Activated T-helper 1 cell treated with anti-CD3 and anti-CD28 coated beads, Interleukin-12 subunit alpha, Interleukin-12 subunit beta, Interleukin-2, Interleukin-4 antibody, amounts not matched to agents 30 ng/mL and 10 ng/mL and 1 ng/mL, durations not matched to agents 14 hours and 24 hours and 36 hours (primary cell): ENCODE measurements at regions of chr7 and their contacts with region 1.

Region 1: DNA sequence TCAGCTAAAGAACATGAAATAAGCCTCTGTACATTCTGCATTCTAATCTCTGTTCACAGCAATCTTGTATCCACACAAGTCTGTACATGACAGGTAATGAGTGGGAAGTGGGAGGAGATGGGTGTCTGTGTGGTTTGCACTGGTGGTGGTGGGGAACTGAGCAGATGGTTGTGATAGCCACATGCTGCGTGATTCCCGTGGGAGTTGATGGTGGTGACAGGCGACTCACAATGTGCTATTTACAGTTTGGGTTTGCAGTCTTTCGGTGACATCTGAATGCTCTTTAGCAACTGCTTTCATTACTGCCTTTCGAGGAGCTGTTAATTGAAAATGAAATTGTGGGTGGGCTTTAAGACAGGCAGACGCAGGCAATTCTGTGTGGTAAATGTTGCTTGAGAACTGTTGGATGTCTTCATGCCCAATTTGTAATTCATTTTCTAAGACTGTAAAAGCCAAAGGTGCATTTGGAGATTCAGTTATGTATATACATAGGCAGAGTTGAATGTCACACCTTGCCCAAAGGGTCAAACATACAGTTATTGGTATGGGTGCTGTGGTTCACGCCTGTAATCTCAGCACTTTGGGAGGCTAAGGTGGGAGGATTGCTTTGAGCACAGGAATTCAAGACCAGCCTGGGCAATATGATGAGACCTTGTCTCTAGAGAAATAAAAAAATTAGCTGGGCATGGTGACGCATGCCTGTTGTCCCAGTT is 308.2 kb downstream of the AUTS2 start:
- DNase-seq: no peak
- H3K4me3 Mint-ChIP-seq: no peak overlapping the region
- H3K27ac Mint-ChIP-seq: no peak overlapping the region
- H3K4me1 Mint-ChIP-seq: no peaks in the 10 kb centered on the region
- H3K27me3 Mint-ChIP-seq: no peaks in the 10 kb centered on the region

Region 2: GRCh38 chr7:69448071-69448470 is 458.4 kb before region 1 on chr7:
- intact Hi-C with region 1: no loop called
- DNase-seq: no peak
- H3K4me3 Mint-ChIP-seq: no peak overlapping the region
- H3K27ac Mint-ChIP-seq: no peak overlapping the region
- H3K4me1 Mint-ChIP-seq: no peaks in the 10 kb centered on the region
- H3K27me3 Mint-ChIP-seq: no peaks in the 10 kb centered on the region

Region 3: GRCh38 chr7:69825113-69825616 is 81.3 kb before region 1 on chr7:
- intact Hi-C with region 1: loop called (anchors 10 kb)
- DNase-seq: no peak
- H3K4me3 Mint-ChIP-seq: no peak overlapping the region
- H3K27ac Mint-ChIP-seq: no peak overlapping the region
- H3K4me1 Mint-ChIP-seq: no peaks in the 10 kb centered on the region
- H3K27me3 Mint-ChIP-seq: no peaks in the 10 kb centered on the region